ENCODE measurements at regions of chr1 and their contacts with region 1.

Region 1: GRCh38 chr1:12434174-12434573 is 183.8 kb downstream of the DHRS3 start:
- DNase-seq: peak; percentile 82
- ATAC-seq: peak; percentile 48
- H3K4me3 Mint-ChIP-seq: no peak overlapping the region
- H3K27ac Mint-ChIP-seq: peak overlapping the region; percentile 14
- H3K4me1 Mint-ChIP-seq: peaks cover 63% of the 10 kb centered on the region
- H3K27me3 Mint-ChIP-seq: no peaks in the 10 kb centered on the region

Region 2: DNA sequence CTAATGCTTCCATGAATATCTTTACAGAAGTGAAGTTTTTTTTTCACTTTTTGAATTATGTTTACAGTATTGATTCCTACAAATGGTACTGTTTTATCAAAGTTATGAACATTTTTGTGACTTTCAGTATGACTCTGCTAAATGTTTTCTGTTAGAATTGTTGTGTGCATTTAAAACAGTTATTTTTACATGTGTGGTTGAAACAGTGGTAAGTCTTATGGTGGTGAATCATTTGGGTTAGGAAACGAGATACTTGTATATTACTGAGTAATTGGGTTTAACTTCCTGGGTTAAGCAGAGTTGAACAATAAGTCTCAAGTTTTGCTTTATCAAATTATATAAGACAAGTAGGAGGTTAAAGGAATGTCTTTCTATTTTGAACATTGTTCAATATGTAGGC is 137.6 kb before region 1 on chr1:
- CTCF ChIA-PET with region 1: no interaction called
- POLR2A ChIA-PET with region 1: no interaction called
- intact Hi-C with region 1: loop called in 1 of 2 experiments (anchors 5 kb)
- DNase-seq: no peak
- ATAC-seq: peak; percentile 90
- H3K4me3 Mint-ChIP-seq: no peak overlapping the region
- H3K27ac Mint-ChIP-seq: no peak overlapping the region
- H3K4me1 Mint-ChIP-seq: peaks cover 22% of the 10 kb centered on the region
- H3K27me3 Mint-ChIP-seq: no peaks in the 10 kb centered on the region

Region 3: GRCh38 chr1:12415038-12415466 is 19.1 kb before region 1 on chr1:
- CTCF ChIA-PET with region 1: interaction called, 4 read pairs
- POLR2A ChIA-PET with region 1: interaction called, 4 read pairs
- intact Hi-C with region 1: loop called (anchors 2 kb)
- DNase-seq: no peak
- ATAC-seq: peak; percentile 70
- H3K4me3 Mint-ChIP-seq: no peak overlapping the region
- H3K27ac Mint-ChIP-seq: peak overlapping the region; percentile 29
- H3K4me1 Mint-ChIP-seq: peaks cover 36% of the 10 kb centered on the region
- H3K27me3 Mint-ChIP-seq: no peaks in the 10 kb centered on the region

Region 4: GRCh38 chr1:12472798-12473551 is 38.8 kb after region 1 on chr1:
- CTCF ChIA-PET with region 1: interaction called, 4 read pairs
- POLR2A ChIA-PET with region 1: no interaction called
- intact Hi-C with region 1: loop called (anchors 1 kb)
- DNase-seq: peak; percentile 91
- ATAC-seq: peak; percentile 94
- H3K4me3 Mint-ChIP-seq: peak overlapping the region; percentile 59
- H3K27ac Mint-ChIP-seq: peak overlapping the region; percentile 97
- H3K4me1 Mint-ChIP-seq: peaks cover 89% of the 10 kb centered on the region
- H3K27me3 Mint-ChIP-seq: no peaks in the 10 kb centered on the region

Region 5: DNA sequence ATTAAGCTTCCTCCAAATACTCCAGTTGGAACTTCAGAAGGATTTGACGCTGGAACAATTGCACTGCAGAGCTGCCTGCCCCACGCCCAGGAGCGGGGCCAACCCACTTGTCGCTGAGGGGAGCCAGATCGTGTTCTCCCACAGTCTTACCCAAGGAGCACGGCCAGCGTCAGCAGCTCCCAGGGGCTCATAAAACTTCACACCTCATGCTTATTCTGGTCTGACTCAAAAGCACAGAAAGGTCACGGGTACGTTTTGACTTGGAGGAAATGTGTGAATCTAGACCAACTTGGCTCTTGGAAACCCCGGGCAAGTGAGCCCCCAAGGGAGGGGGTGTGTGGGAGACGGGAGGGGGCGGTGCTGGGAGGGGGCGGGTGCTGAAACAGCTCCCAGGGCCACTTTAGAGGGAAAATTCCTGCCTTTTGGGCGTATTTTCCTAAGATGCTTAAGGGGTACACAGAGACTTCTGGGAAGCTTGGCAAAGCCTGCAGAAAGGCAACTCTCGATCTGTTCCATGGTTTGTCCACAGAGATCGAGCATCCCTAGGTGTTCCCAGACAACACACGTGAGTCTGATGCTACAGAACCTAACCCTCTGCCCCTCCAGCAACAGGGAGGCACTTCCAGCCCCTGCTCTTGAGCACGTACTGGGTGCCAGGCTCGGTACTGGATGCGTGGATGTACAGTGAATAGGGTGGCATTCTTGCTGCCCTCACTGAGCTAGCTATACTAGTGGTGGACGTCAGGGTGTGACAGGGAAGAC is 84.9 kb after region 1 on chr1:
- CTCF ChIA-PET with region 1: no interaction called
- POLR2A ChIA-PET with region 1: no interaction called
- intact Hi-C with region 1: loop called in 1 of 2 experiments (anchors 2 kb)
- DNase-seq: peak; percentile 82
- ATAC-seq: peak; percentile 98
- H3K4me3 Mint-ChIP-seq: no peak overlapping the region
- H3K27ac Mint-ChIP-seq: peak overlapping the region; percentile 59
- H3K4me1 Mint-ChIP-seq: peaks cover 34% of the 10 kb centered on the region
- H3K27me3 Mint-ChIP-seq: no peaks in the 10 kb centered on the region

Measured in activated CD4-positive, alpha-beta T cell treated with anti-CD3 and anti-CD28 coated beads for 36 hours (primary cell).